Esophagus squamous epithelium (tissue), 5 donors: ENCODE measurements at regions of chr1 and their contacts with region 1.

Region 1: DNA sequence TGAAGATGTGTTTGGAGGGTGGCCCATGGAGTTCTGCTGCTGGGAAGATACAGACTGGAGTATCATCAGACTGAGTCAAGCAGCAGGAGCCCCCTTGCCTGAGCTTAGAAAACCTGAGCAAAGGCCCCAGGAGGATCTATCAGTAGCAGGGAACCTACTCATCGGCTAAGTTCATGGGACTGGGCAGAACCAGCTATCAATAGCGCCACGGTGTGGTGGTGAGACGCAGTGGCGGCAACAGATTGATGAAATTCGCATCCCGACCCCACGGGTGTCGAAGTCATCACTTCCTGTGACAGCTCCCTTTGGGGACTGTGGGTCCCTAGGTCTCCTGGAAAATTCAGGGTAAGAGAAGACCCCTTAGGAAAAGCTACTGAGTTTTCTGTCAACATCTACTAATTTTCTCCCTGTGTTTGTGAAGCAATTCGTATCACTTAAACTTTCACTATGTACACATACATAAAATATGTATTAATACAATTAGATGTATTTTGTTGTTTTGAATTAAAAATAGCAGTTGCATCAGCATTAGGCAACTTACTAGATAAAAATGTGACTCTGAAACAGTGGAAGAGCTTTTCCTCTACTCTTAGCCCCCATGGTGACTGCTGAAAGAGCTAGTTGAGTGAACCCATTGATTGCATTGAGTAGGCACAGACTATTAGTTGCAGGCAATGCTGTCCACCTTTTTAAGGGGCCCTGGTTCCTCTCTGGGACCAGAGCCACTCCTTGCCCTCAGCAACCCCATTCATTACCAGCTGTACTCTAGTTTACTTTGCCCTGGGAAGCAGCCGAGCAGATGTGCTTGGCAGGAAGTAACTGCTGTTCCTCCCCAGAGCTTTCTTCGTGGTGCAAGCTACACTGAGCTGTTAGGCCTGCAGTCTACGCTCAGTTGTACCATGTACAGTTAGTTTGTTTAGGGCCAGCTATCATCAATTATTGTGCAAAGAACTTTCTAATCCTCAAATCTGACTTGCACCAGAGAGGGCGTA is 7.3 kb upstream of the CACNA1S start:
- DNase-seq: no peak
- H3K4me3 ChIP-seq: no peak overlapping the region
- H3K27ac ChIP-seq: no peak overlapping the region
- H3K4me1 ChIP-seq: peaks cover 1 to 13% (median 7%) of the 10 kb centered on the region in 3 donors
- H3K27me3 ChIP-seq: peaks cover 0 to 79% (median 4%) of the 10 kb centered on the region in 4 donors
- CTCF ChIP-seq: peak in 4 of 6 experiments; percentile 31 to 58 (median 38)
- POLR2A ChIP-seq: no peak

Region 2: GRCh38 chr1:200979574-200980451 is 139.7 kb before region 1 on chr1:
- intact Hi-C with region 1: loop called (anchors 5 kb)
- DNase-seq: no peak
- H3K4me3 ChIP-seq: no peak overlapping the region
- H3K27ac ChIP-seq: no peak overlapping the region
- H3K4me1 ChIP-seq: no peaks in the 10 kb centered on the region
- H3K27me3 ChIP-seq: no peaks in the 10 kb centered on the region
- CTCF ChIP-seq: peak; percentile 33 to 70 (median 46)
- POLR2A ChIP-seq: no peak

Region 3: DNA sequence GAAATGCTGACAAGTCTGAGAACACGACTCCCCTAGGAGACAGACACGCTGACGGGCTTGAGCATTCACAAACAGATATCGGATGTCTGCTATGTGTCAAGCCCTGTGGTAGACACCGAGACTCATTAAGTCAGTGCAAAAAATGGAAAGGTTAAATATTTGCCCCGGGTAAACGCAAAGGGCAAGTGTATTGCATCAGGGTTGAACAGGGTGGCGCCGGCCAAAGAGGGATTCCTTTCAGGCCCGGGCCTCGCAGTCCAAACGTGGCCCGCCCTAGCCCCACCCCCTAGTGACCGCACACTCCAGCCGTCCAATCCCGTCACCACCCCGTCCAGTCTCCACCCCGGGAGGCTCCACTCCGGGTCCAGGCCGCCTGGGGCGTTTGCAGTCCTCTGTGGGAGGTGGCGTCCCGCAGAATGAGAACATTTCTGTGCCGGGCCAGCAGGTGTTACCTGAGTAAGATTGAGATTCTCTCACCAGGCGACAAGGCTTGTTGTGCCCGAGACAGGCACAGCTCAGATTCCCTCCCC is 51.1 kb after region 1 on chr1:
- intact Hi-C with region 1: no loop called
- DNase-seq: peak; percentile 29
- H3K4me3 ChIP-seq: peak overlapping the region; percentile 47 to 73 (median 63)
- H3K27ac ChIP-seq: peak overlapping the region; percentile 81 to 92 (median 88)
- H3K4me1 ChIP-seq: peaks cover 0 to 19% (median 4%) of the 10 kb centered on the region in 3 donors
- H3K27me3 ChIP-seq: peaks cover 0 to 3% (median 0%) of the 10 kb centered on the region in 4 donors
- CTCF ChIP-seq: peak in 2 of 6 experiments; percentile 16 to 31
- POLR2A ChIP-seq: peak in 3 of 4 donors; percentile 8 to 77 (median 54)